Activated CD4-positive, alpha-beta memory T cell treated with anti-CD3 and anti-CD28 coated beads for 36 hours (primary cell): ENCODE measurements at regions of chr1 and their contacts with region 1.

Region 1: DNA sequence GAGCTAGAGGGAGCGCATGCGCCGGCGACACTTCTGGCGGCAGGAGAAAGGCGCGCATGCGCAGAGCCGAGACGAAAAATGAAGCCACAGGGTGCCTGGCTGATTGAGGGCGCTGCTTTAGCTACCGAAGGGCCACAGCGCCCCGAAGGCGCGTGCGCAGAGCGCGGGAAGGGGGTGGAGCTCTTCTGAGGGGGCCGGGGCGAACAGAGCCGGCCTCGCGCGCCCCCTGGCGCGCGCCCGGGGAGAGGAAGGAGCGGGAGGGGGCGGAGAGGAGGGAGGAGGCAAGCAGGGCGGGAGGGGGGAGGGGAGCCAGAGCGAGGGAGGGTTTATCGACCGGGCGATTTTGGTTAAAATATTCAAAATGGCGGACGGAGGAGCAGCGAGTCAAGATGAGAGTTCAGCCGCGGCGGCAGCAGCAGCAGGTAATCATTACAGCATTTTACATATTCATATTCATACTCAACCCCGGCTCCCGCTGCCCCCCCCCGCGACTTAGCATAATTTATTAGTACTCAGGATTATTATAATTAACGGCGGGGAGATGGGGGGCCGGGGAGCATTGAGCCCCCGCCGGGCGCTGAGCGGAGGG is at the start of gene POU2F1:
- DNase-seq: peak; percentile 99
- H3K4me3 Mint-ChIP-seq: peak within 1 kb of the TSS; percentile 95
- H3K27ac Mint-ChIP-seq: peak within 1 kb of the TSS; percentile 98
- H3K4me1 Mint-ChIP-seq: peaks cover 45% of the 10 kb centered on the region
- H3K27me3 Mint-ChIP-seq: peaks cover 1% of the 10 kb centered on the region
- total RNA-seq, gene POU2F1: 17.7 to 20.1 TPM

Region 2: GRCh38 chr1:166910396-166910994 is 310.1 kb before region 1 on chr1:
- CTCF ChIA-PET with region 1: interaction called, 18 read pairs
- POLR2A ChIA-PET with region 1: no interaction called
- intact Hi-C with region 1: no loop called
- DNase-seq: peak; percentile 86
- H3K4me3 Mint-ChIP-seq: no peak overlapping the region
- H3K27ac Mint-ChIP-seq: no peak overlapping the region
- H3K4me1 Mint-ChIP-seq: peaks cover 12% of the 10 kb centered on the region
- H3K27me3 Mint-ChIP-seq: no peaks in the 10 kb centered on the region

Region 3: GRCh38 chr1:167090314-167090942 is 130.2 kb before region 1 on chr1 and contains the start of gene GPA33:
- CTCF ChIA-PET with region 1: no interaction called
- POLR2A ChIA-PET with region 1: interaction called, 3 read pairs
- intact Hi-C with region 1: loop called (anchors 2 kb)
- DNase-seq: peak; percentile 49
- H3K4me3 Mint-ChIP-seq: peak within 1 kb of the TSS; percentile 56
- H3K27ac Mint-ChIP-seq: peak within 1 kb of the TSS; percentile 88
- H3K4me1 Mint-ChIP-seq: peaks cover 34% of the 10 kb centered on the region
- H3K27me3 Mint-ChIP-seq: no peaks in the 10 kb centered on the region
- total RNA-seq, gene GPA33: 1.8 to 1.9 TPM

Region 4: DNA sequence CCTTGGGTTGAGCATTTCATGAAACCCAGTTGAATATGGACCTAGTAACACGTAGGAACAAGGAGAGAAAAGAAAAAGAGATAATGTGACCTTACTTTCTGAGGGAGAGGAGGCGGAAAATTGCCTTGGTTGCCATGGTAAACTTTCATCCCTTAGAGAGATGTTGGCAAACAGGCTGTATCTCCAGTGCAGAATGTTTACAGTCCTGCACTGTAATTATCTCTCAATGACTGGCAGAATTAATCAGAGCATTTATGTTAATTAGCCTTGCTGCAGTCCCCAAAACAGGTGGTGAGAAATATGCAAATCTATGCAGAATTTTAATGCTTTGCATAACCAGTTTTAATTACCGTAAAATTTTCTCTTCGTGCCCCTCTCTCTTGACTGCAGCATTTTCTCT is 150.4 kb after region 1 on chr1:
- CTCF ChIA-PET with region 1: no interaction called
- POLR2A ChIA-PET with region 1: no interaction called
- intact Hi-C with region 1: no loop called
- DNase-seq: no peak
- H3K4me3 Mint-ChIP-seq: no peak overlapping the region
- H3K27ac Mint-ChIP-seq: no peak overlapping the region
- H3K4me1 Mint-ChIP-seq: no peaks in the 10 kb centered on the region
- H3K27me3 Mint-ChIP-seq: no peaks in the 10 kb centered on the region

Region 5: DNA sequence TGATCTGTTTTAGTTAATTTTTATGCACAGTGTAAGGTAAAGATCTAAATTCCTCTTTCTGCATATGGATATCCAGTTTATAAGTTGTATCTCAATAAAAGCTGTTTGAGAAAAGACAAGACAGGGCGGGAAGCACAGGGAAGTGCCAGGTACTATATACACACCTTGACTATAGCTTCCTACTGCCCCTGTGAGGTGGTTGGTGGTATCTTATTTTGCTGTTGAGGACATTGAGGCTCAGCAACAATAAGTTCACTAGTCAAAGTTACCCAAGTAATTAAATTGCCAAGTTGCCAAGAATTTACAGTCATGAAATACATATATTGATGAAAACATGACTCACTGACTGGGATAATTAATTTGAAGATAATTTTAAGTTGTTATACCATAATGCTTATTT is 188.6 kb after region 1 on chr1:
- CTCF ChIA-PET with region 1: no interaction called
- POLR2A ChIA-PET with region 1: no interaction called
- intact Hi-C with region 1: loop called (anchors 2 kb)
- DNase-seq: no peak
- H3K4me3 Mint-ChIP-seq: no peak overlapping the region
- H3K27ac Mint-ChIP-seq: no peak overlapping the region
- H3K4me1 Mint-ChIP-seq: peaks cover 22% of the 10 kb centered on the region
- H3K27me3 Mint-ChIP-seq: no peaks in the 10 kb centered on the region

Region 6: GRCh38 chr1:167517535-167518330 is 297.1 kb after region 1 on chr1:
- CTCF ChIA-PET with region 1: interaction called, 5 read pairs
- POLR2A ChIA-PET with region 1: interaction called, 12 read pairs
- intact Hi-C with region 1: loop called (anchors 1 kb)
- DNase-seq: peak; percentile 96
- H3K4me3 Mint-ChIP-seq: peak overlapping the region; percentile 88
- H3K27ac Mint-ChIP-seq: peak overlapping the region; percentile 98
- H3K4me1 Mint-ChIP-seq: peaks cover 35% of the 10 kb centered on the region
- H3K27me3 Mint-ChIP-seq: no peaks in the 10 kb centered on the region

Region 7: DNA sequence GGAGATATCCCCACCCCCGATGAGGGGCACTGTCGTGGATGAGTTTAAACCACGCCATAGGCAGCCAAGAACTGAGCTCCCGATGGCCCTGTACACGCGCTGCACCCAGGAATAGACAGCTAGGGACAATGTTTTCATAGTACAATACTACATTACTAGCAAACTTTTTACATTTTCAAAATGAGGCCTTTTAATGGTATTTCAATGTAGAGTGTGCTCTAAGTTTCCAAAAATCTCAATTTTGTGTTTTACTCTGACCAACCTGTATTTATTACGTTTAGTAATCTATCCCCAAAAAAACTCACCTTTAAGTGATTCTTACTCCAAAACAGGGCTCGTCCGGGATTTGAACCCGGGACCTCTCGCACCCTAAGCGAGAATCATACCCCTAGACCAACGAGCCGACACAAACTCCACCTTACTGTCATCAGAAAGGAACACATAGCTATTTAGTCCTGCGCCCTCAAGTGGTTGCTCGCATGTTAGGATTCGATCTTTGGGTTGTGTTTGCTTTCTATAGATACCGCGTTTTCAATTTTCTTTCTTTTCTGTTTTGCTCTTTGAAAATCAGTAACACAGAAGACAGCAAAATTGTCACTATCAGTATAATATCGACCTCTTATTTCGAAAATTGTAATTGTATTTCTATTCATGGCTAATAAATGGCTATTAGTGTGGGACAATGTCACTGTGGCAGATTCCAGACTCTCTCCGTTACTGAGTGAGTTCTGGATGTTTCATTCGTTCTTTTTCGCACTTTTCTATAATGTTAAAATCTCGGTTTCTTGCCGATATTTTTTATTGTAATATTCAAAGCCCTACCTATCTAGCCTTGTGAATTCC is 494.7 kb after region 1 on chr1:
- CTCF ChIA-PET with region 1: no interaction called
- POLR2A ChIA-PET with region 1: no interaction called
- intact Hi-C with region 1: loop called (anchors 1 kb)
- DNase-seq: peak; percentile 93
- H3K4me3 Mint-ChIP-seq: peak overlapping the region; percentile 80
- H3K27ac Mint-ChIP-seq: peak overlapping the region; percentile 93
- H3K4me1 Mint-ChIP-seq: peaks cover 35% of the 10 kb centered on the region
- H3K27me3 Mint-ChIP-seq: peaks cover 7% of the 10 kb centered on the region